ENCODE measurements at regions of chr6 and their contacts with region 1.

Region 1: GRCh38 chr6:144104898-144105487 is 9.6 kb upstream of the SF3B5 start:
- DNase-seq: peak; percentile 84
- H3K4me3 ChIP-seq: no peak overlapping the region
- H3K27ac ChIP-seq: no peak overlapping the region
- H3K4me1 ChIP-seq: no peaks in the 10 kb centered on the region
- H3K27me3 ChIP-seq: peaks cover 0 to 3% of the 10 kb centered on the region in 2 experiments
- CTCF ChIP-seq: peak; percentile 40 to 45
- POLR2A ChIP-seq: no peak

Region 2: DNA sequence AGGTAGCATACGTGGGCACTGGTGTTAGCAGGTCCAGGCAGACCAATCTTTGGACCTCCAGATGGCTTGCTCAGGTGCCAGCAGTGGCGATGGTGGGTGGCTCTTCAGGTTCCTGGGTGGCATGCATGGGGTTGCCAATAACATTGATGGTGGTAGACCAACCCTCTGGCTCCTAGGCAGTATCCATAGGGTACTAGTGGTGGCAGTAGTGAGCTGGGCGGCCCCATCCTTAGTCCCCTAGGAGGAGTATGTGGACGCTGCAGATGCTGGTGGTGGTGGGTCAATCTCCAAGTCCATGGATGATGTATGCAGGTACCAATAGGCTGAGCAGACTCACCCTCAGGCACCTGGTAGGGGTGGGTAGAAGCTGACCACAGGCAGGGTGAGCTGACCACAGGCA is 170.1 kb before region 1 on chr6:
- CTCF ChIA-PET with region 1: no interaction called
- POLR2A ChIA-PET with region 1: no interaction called
- dilution Hi-C with region 1: no loop called
- intact Hi-C with region 1: no loop called
- DNase-seq: no peak
- H3K4me3 ChIP-seq: no peak overlapping the region
- H3K27ac ChIP-seq: no peak overlapping the region
- H3K4me1 ChIP-seq: no peaks in the 10 kb centered on the region
- H3K27me3 ChIP-seq: peaks cover 4 to 7% of the 10 kb centered on the region in 2 experiments
- CTCF ChIP-seq: no peak
- POLR2A ChIP-seq: no peak

Region 3: DNA sequence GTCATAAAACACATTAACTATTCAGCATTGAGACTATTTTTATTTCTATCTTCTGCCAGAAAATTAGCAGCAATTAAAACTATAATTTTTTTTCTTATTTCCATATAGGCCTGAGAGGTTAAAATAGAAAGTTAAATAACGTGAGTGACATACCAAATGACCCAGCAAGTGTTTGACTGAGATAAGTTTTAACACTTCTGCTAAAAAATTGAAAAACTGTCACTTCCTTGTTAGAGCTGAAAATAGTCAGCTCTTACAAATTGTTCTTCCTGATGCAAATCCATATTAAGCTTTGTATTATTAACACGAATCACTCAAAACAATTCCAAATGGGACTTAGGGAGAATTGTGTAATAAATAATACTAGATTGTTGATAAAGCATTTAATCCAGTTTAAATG is 18.8 kb after region 1 on chr6:
- CTCF ChIA-PET with region 1: interaction called, 13 read pairs
- POLR2A ChIA-PET with region 1: no interaction called
- dilution Hi-C with region 1: no loop called
- intact Hi-C with region 1: no loop called
- DNase-seq: no peak
- H3K4me3 ChIP-seq: no peak overlapping the region
- H3K27ac ChIP-seq: no peak overlapping the region
- H3K4me1 ChIP-seq: no peaks in the 10 kb centered on the region
- H3K27me3 ChIP-seq: no peaks in the 10 kb centered on the region
- CTCF ChIP-seq: no peak
- POLR2A ChIP-seq: no peak

Region 4: GRCh38 chr6:144158133-144158532 is 53.1 kb after region 1 on chr6:
- CTCF ChIA-PET with region 1: interaction called, 12 read pairs
- POLR2A ChIA-PET with region 1: no interaction called
- dilution Hi-C with region 1: no loop called
- intact Hi-C with region 1: no loop called
- DNase-seq: peak; percentile 79
- H3K4me3 ChIP-seq: no peak overlapping the region
- H3K27ac ChIP-seq: peak overlapping the region; percentile 93
- H3K4me1 ChIP-seq: peaks cover 32% of the 10 kb centered on the region
- H3K27me3 ChIP-seq: no peaks in the 10 kb centered on the region
- CTCF ChIP-seq: no peak
- POLR2A ChIP-seq: no peak

Region 5: DNA sequence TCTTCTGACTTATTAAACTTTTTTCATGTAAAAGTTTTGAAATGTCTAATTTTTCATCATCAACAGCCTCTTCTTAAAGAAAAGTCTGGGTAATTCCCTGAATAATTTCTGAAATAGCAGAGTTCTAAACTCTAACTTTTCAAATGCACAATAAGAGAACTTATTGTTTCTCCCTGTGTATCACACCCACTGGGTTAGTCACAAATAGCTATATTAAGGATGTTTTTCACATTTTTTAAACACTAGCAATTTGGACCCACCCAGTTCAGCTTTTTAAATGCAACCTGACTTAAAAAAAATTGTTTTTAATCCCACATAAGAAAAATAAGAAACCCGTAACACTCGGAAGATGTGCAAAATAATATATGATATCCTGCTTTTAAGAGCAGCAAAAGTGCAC is 118.7 kb after region 1 on chr6:
- CTCF ChIA-PET with region 1: interaction called, 96 read pairs
- POLR2A ChIA-PET with region 1: no interaction called
- dilution Hi-C with region 1: no loop called
- intact Hi-C with region 1: no loop called
- DNase-seq: no peak
- H3K4me3 ChIP-seq: no peak overlapping the region
- H3K27ac ChIP-seq: no peak overlapping the region
- H3K4me1 ChIP-seq: no peaks in the 10 kb centered on the region
- H3K27me3 ChIP-seq: no peaks in the 10 kb centered on the region
- CTCF ChIP-seq: no peak
- POLR2A ChIP-seq: no peak

Region 6: GRCh38 chr6:144343701-144344428 is 238.9 kb after region 1 on chr6:
- CTCF ChIA-PET with region 1: interaction called, 4 read pairs
- POLR2A ChIA-PET with region 1: no interaction called
- dilution Hi-C with region 1: no loop called
- intact Hi-C with region 1: loop called (anchors 1 kb)
- DNase-seq: peak; percentile 88
- H3K4me3 ChIP-seq: peak overlapping the region in 2 of 3 experiments; percentile 16 to 81
- H3K27ac ChIP-seq: peak overlapping the region; percentile 77
- H3K4me1 ChIP-seq: peaks cover 70% of the 10 kb centered on the region
- H3K27me3 ChIP-seq: no peaks in the 10 kb centered on the region
- CTCF ChIP-seq: no peak
- POLR2A ChIP-seq: peak; percentile 61

Region 7: DNA sequence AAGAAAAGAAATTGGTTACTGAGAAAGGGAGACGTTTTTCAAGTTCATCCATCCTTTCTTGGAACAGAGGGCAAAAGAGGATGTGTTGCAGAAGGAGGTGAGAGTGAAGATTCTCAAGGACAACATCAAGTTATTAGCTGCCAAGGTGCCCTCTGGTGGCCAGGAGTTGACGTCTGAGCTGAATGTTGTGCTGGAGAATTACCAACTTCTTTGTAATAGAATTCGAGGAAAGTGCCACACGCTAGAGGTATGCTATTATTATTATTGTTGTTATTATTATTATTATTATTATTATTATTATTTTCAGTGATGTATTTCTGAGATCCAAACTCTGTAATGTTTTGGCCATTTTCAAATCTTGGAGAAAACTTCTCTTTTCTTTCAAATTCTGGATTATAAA is 377.1 kb after region 1 on chr6:
- CTCF ChIA-PET with region 1: interaction called, 46 read pairs
- POLR2A ChIA-PET with region 1: no interaction called
- dilution Hi-C with region 1: no loop called
- intact Hi-C with region 1: loop called (anchors 1 kb)
- DNase-seq: peak; percentile 84
- H3K4me3 ChIP-seq: no peak overlapping the region
- H3K27ac ChIP-seq: no peak overlapping the region
- H3K4me1 ChIP-seq: no peaks in the 10 kb centered on the region
- H3K27me3 ChIP-seq: no peaks in the 10 kb centered on the region
- CTCF ChIP-seq: peak; percentile 70 to 71
- POLR2A ChIP-seq: no peak

Measured in endothelial cell of umbilical vein (primary cell).